ENCODE measurements at regions of chr4 and their contacts with region 1.

Region 1: DNA sequence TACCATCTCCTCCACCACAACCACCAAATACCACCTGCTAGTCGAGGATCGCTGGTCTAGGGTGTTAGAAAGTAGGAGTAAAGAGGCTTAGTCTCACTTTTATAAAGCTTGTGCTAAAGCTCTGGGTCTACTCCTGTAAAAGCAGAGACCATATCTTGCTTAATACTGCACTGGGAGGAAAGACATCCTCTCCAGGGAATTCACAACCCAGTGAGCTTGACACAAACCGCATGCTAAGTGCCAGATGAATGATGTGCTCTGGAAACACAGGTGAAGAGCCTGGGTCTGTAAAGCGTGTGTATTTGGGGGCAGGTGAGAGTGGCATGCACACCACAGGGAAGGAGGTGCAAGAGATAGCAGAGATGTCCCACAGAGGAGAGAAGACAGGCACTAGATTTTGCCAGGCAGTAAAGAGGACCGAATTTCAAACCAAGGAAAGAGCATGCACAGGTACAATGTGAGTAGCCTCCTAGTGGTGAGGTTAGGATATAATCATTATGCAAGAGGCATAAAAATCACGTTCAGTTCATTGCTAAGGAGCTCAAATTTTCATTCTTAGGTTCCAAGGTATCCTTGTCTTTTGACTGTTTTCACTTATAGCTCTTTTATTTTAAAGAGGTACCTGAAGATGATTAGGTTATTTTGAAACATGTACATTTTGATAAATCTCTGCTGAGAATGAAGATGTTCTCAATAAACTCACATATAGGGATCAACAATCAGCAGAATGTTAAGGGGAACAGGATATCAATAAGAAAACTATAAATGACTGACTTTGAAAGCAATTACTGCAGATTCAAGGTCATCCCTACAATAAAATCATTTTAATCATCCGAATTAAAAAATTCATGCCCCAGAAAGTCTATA is 20.7 kb downstream of the TAPT1 start:
- DNase-seq: peak in 2 of 3 donors; percentile 61 to 63
- H3K4me3 ChIP-seq: no peak overlapping the region
- H3K27ac ChIP-seq: no peak overlapping the region
- H3K4me1 ChIP-seq: peaks cover 3 to 30% (median 18%) of the 10 kb centered on the region in 4 experiments
- H3K27me3 ChIP-seq: no peaks in the 10 kb centered on the region

Region 2: GRCh38 chr4:16217300-16218051 is 11.9 kb after region 1 on chr4:
- CTCF ChIA-PET with region 1: interaction called, 100 read pairs
- POLR2A ChIA-PET with region 1: interaction called, 5 read pairs
- DNase-seq: peak in 2 of 3 donors; percentile 30 to 37
- H3K4me3 ChIP-seq: peak overlapping the region in 2 of 7 experiments; percentile 7 to 28
- H3K27ac ChIP-seq: no peak overlapping the region
- H3K4me1 ChIP-seq: peaks cover 3 to 48% (median 22%) of the 10 kb centered on the region in 4 experiments
- H3K27me3 ChIP-seq: no peaks in the 10 kb centered on the region

Region 3: DNA sequence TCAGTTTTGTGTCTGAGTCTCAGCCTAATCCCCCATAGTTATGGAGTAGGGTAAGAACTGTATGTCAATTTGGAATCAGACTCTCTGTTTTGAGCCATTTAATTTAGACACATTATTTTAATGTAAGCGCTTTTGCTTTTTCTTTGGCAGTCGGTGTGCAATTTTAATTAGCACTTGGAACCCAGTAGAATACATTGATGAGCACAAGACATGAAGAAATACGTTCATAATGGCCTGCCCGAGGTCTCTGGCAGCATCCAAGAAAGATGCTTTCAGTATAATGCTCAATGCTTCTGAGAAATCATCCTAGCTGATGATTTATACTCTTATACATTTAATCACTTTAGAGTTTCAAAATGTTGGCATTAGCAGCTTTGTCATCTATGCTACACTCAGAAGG is 29.7 kb after region 1 on chr4:
- CTCF ChIA-PET with region 1: interaction called, 14 read pairs
- POLR2A ChIA-PET with region 1: no interaction called
- DNase-seq: no peak
- H3K4me3 ChIP-seq: no peak overlapping the region
- H3K27ac ChIP-seq: no peak overlapping the region
- H3K4me1 ChIP-seq: peaks cover 10 to 36% (median 30%) of the 10 kb centered on the region in 4 experiments
- H3K27me3 ChIP-seq: no peaks in the 10 kb centered on the region

Region 4: DNA sequence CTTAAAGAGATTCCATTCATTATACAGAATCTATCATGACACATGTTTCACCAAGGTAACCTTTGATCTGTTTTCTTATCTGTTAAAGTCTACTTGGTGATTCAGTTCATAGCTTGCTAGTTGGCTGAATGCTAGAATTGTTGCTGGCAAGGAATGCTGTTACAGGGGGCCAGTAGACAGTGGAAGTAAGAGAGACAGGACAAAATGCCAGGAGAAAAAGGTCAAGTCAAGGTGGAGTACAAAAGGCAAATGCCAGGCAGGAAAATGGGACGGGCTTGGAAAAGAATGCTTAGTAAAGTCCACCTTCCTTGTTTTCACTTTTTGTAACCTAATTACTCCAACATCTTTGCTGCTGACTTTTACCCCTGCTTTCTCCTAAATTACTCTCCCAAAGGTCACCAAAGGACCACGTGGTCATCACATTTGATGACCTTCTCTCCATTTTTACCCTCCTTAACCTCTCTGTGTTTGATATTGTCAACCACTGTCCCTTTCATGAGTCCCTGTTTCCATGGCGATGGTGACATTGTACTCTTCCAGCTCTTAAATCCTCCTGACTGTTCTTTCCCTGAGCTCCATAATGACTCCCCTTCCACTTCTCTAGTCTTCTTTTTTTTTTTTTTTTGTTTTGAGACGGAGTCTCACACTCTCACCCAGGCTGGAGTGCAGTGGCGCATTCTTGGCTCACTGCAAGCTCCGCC is 45.3 kb after region 1 on chr4:
- CTCF ChIA-PET with region 1: interaction called, 11 read pairs
- POLR2A ChIA-PET with region 1: no interaction called
- DNase-seq: no peak
- H3K4me3 ChIP-seq: no peak overlapping the region
- H3K27ac ChIP-seq: no peak overlapping the region
- H3K4me1 ChIP-seq: no peaks in the 10 kb centered on the region
- H3K27me3 ChIP-seq: no peaks in the 10 kb centered on the region

Measured in common myeloid progenitor, CD34-positive (primary cell).